Heart right ventricle (tissue), 16 donors: ENCODE measurements at regions of chr21 and their contacts with region 1.

Region 1: GRCh38 chr21:27700974-27701614 is 734.2 kb upstream of the ADAMTS5 start:
- DNase-seq: peak; percentile 77 to 88
- ATAC-seq: peak; percentile 76 to 95 (median 91)
- H3K4me3 ChIP-seq: peak overlapping the region in 1 of 10 donors; percentile 7
- H3K27ac ChIP-seq: no peak overlapping the region
- H3K4me1 ChIP-seq: peaks cover 0 to 21% (median 0%) of the 10 kb centered on the region in 9 donors
- H3K27me3 ChIP-seq: no peaks in the 10 kb centered on the region
- CTCF ChIP-seq: peak; percentile 76 to 95 (median 89)

Region 2: DNA sequence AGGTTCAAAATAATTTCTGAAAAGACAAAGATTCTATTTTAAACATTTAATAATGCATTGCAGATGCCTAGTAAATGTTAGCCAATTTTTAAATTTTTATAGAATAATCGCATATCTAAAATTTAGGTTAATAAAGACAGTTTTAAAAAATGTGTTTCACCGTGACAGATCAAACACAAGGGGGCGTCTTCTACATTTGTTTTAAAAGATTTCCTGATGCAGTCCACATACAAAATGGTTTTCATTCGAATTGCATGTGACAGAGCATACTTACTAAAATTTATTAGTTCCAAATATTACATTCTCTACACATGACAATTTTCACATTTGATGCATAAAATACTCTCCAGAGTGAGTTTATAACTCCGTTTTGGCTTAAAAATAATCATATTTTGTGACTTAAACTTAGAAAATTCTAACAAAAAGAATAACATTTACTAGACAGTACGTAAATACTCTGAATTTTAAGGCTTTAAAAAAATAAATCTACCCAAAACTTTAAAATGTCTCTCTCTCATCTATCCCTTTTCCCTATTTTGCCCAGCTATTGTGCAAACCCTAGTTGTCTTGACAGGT is 931.4 kb before region 1 on chr21:
- intact Hi-C with region 1: loop called in 2 of 10 experiments (anchors 5 kb)
- DNase-seq: peak in 1 of 2 donors; percentile 45
- ATAC-seq: peak in 3 of 8 donors; percentile 39 to 59 (median 49)
- H3K4me3 ChIP-seq: no peak overlapping the region
- H3K27ac ChIP-seq: no peak overlapping the region
- H3K4me1 ChIP-seq: peaks cover 0 to 3% (median 0%) of the 10 kb centered on the region in 9 donors
- H3K27me3 ChIP-seq: no peaks in the 10 kb centered on the region
- CTCF ChIP-seq: peak; percentile 38 to 80 (median 71)

Region 3: DNA sequence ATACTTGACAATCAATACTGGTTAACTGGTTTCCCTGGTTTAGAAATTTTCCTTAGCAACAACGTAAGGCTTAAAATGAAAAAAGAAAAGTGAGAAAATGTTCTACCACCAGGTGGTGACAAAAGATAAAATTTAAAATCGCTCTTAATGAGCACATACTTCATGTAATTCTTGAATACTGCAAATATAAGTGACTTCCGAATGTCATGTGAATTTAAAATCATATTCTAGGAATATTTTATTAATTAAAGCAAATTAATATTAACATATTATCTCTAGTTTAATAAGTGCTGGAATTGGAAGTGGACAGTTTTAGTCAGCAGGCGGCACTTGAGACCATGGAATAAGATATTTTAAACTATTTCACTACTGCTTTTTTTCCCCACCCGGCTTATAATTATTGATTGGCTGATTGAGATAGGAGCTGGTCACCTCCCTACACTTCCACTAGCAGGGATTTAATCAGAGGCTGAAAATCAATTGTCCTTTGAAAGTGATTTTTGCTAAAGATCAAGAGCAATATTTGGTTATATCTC is 850.9 kb before region 1 on chr21:
- intact Hi-C with region 1: loop called (anchors 1 to 5 kb)
- DNase-seq: no peak
- ATAC-seq: no peak
- H3K4me3 ChIP-seq: peak overlapping the region in 6 of 10 donors; percentile 4 to 18 (median 8)
- H3K27ac ChIP-seq: no peak overlapping the region
- H3K4me1 ChIP-seq: peaks cover 0 to 33% (median 21%) of the 10 kb centered on the region in 9 donors
- H3K27me3 ChIP-seq: peaks cover 0 to 31% (median 0%) of the 10 kb centered on the region in 7 donors
- CTCF ChIP-seq: peak; percentile 56 to 84 (median 71)

Region 4: GRCh38 chr21:27564684-27565301 is 136.3 kb before region 1 on chr21:
- intact Hi-C with region 1: loop called in 2 of 10 experiments (anchors 5 to 10 kb)
- DNase-seq: peak; percentile 17 to 43
- ATAC-seq: peak in 7 of 8 donors; percentile 67 to 82 (median 76)
- H3K4me3 ChIP-seq: no peak overlapping the region
- H3K27ac ChIP-seq: no peak overlapping the region
- H3K4me1 ChIP-seq: peaks cover 0 to 5% (median under 1%) of the 10 kb centered on the region in 9 donors
- H3K27me3 ChIP-seq: no peaks in the 10 kb centered on the region
- CTCF ChIP-seq: peak; percentile 54 to 87 (median 82)

Region 5: DNA sequence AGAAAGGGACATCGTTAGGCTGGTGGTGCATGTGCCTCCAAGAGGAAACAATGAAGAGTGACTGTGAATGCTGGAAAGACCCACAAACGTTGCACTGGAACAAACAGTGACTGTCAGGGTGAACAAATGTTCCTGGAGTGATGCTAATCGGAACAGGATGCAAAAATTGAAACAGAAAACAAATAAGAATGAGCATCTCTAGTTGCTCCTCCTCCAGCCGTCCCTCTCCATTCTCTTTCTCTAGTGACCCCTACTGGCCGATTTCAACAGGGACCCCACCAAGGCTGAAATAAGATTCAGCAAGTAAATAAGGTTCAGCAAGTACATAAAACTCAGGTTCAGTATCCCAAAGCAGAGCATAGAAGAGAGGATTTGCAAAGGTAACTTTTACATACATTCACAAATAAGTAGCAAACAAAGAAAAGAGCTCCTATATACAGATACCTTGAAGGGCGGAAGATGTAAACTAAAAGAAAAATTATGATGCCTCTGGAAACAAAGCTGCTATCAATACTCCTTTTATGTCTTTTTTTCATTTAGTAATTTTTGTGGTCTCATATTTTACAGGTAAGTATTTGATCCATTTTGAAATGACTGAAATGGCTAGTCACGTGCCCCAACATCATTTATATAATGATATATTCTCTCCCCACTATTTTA is 101.9 kb after region 1 on chr21:
- intact Hi-C with region 1: loop called in 2 of 10 experiments (anchors 5 kb)
- DNase-seq: peak in 1 of 2 donors; percentile 36
- ATAC-seq: peak in 2 of 8 donors; percentile 37 to 38
- H3K4me3 ChIP-seq: no peak overlapping the region
- H3K27ac ChIP-seq: no peak overlapping the region
- H3K4me1 ChIP-seq: peaks cover 0 to 15% (median 0%) of the 10 kb centered on the region in 9 donors
- H3K27me3 ChIP-seq: no peaks in the 10 kb centered on the region
- CTCF ChIP-seq: peak; percentile 19 to 75 (median 60)

Region 6: GRCh38 chr21:28063241-28064216 is 362.4 kb after region 1 on chr21:
- intact Hi-C with region 1: loop called in 3 of 10 experiments (anchors 10 kb)
- DNase-seq: no peak
- ATAC-seq: no peak
- H3K4me3 ChIP-seq: no peak overlapping the region
- H3K27ac ChIP-seq: no peak overlapping the region
- H3K4me1 ChIP-seq: peaks cover 0 to 24% (median 15%) of the 10 kb centered on the region in 9 donors
- H3K27me3 ChIP-seq: no peaks in the 10 kb centered on the region
- CTCF ChIP-seq: no peak

Region 7: DNA sequence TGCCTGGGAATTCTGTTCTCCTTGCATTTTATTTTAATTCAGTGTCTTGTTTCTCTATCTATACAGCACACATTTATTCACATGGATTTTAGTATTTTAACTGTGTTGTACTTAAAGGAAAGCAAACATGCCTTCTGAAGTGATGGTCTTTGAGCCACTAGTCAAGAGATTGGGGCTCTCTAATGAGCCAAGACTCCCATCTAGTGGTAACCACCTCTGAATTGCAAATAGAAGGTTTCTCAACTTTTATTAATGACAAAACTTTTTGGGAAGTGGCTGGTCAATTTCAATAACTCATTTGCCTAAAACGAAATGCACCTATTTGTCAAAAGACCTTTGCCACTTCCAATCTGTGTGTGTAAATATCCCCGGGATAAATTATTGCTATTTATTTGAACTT is 1091.9 kb after region 1 on chr21:
- intact Hi-C with region 1: loop called in 1 of 10 experiments (anchors 10 kb)
- DNase-seq: peak in 1 of 2 donors; percentile 28
- ATAC-seq: peak in 5 of 8 donors; percentile 58 to 72 (median 64)
- H3K4me3 ChIP-seq: no peak overlapping the region
- H3K27ac ChIP-seq: no peak overlapping the region
- H3K4me1 ChIP-seq: peaks cover 0 to 19% (median 4%) of the 10 kb centered on the region in 9 donors
- H3K27me3 ChIP-seq: no peaks in the 10 kb centered on the region
- CTCF ChIP-seq: peak; percentile 11 to 69 (median 61)